ENCODE measurements at regions of chr5 and their contacts with region 1.

Region 1: GRCh38 chr5:54310433-54311175 is at the start of gene ARL15:
- DNase-seq: peak; percentile 98
- H3K4me3 Mint-ChIP-seq: peak within 1 kb of the TSS; percentile 89
- H3K27ac Mint-ChIP-seq: peak within 1 kb of the TSS; percentile 84
- H3K4me1 Mint-ChIP-seq: peaks cover 24% of the 10 kb centered on the region
- H3K27me3 Mint-ChIP-seq: no peaks in the 10 kb centered on the region
- total RNA-seq, gene ARL15: 6.7 to 7.0 TPM

Region 2: DNA sequence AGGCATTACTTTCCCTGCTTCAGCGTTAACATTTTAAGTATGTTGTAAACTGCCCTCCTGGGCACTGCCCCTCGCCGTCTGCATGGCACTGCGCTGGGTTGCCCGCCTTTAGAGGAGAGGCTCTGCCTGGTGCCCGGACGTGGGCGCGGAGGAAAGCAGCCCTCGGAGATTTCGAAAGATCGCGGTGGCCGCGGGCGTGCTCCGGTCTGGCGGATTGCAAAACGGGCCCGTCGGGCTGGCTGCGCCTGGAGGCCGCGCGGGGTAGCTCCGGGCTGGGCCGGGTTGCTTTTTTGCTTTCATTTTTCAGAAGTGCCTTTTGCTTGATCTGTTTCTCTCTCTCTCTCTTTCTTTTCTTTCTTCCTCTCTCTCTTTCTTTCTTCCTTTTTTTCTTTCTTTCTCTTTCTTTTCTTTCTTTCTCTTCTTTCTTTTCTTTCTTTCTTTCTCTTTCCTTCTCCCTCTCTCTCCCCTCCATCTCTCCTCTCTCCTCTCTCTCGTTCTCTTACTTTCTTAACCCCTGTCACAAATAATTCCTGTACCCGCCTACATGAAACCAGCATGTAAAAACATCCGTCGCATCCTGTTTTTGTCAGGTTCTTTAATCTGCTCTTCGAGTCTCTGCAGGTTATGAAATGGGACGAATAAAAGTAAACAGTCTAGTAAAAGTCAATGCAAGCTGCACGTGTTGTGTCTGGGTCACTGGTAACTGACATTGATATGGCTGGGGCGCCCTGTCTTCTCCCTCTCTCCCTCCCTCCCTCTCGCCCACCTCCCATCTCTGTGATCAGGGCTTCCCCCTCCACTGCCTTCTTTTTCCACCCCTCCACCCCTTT is 828.5 kb before region 1 on chr5:
- CTCF ChIA-PET with region 1: no interaction called
- intact Hi-C with region 1: loop called (anchors 2 kb)
- DNase-seq: peak; percentile 71
- H3K4me3 Mint-ChIP-seq: peak overlapping the region; percentile 76
- H3K27ac Mint-ChIP-seq: no peak overlapping the region
- H3K4me1 Mint-ChIP-seq: peaks cover 15% of the 10 kb centered on the region
- H3K27me3 Mint-ChIP-seq: peaks cover 38% of the 10 kb centered on the region

Region 3: GRCh38 chr5:54243473-54244080 is 67.0 kb before region 1 on chr5:
- CTCF ChIA-PET with region 1: interaction called, 5 read pairs
- intact Hi-C with region 1: loop called (anchors 1 kb)
- DNase-seq: peak; percentile 52
- H3K4me3 Mint-ChIP-seq: no peak overlapping the region
- H3K27ac Mint-ChIP-seq: no peak overlapping the region
- H3K4me1 Mint-ChIP-seq: peaks cover 12% of the 10 kb centered on the region
- H3K27me3 Mint-ChIP-seq: no peaks in the 10 kb centered on the region

Region 4: DNA sequence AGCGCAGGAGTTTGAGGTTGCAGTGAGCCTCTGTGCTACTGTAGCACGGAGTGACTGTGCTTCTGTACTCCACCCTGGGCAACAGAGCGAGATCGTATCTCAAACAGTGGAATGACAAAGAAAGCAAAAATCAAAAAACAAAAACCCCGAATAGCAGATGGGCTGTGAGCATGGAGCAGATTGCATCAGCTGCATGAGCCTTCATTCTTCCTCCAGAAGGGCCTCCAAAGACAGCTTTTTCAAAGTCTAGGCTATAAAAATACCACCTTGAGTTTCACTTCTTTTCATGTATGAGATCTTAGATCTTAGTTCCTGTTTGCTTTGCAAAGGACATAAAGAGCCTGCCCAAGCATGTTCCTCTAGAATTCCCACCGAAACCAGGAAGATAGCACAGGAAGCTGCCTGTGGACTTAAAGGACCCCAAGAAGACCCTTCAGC is 129.9 kb after region 1 on chr5:
- CTCF ChIA-PET with region 1: interaction called, 3 read pairs
- intact Hi-C with region 1: loop called (anchors 1 kb)
- DNase-seq: peak; percentile 48
- H3K4me3 Mint-ChIP-seq: peak overlapping the region; percentile 62
- H3K27ac Mint-ChIP-seq: peak overlapping the region; percentile 78
- H3K4me1 Mint-ChIP-seq: peaks cover 35% of the 10 kb centered on the region
- H3K27me3 Mint-ChIP-seq: no peaks in the 10 kb centered on the region

Region 5: DNA sequence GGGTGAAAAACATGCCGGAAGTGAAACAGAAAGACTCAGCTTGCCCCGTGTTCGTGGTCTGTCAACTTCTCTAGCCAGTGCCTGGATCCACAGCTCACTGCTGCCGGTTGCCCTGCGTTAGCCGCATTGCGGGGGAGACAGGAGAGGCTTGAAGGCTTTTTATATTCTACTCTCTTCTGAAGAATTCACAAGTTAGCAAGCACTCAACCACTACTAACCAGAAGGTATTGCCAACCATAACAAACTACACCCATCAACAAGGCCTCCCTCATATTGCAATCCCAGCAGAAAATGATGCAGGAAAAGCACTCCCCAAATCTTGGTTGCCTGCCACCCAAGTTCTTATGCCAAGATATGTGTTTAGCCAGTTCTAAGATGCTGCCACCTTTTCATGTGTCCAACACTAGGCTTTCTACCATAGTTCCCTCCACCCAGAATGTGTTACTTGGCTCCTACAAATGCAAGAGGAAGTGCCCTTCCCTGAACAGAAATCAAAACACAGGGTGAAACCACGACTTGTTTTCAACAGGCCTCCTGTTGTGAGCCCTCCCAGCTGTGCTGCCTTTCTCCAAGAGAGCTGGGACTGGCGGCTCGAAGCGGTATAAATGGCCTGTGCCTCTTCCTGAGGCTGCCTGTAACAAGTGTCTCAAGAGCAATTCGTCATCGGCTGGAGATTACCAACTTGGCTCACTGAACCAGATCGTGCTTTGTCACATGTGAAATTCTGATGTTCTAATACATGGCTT is 335.9 kb after region 1 on chr5:
- CTCF ChIA-PET with region 1: no interaction called
- intact Hi-C with region 1: loop called (anchors 5 kb)
- DNase-seq: peak; percentile 70
- H3K4me3 Mint-ChIP-seq: peak overlapping the region; percentile 53
- H3K27ac Mint-ChIP-seq: peak overlapping the region; percentile 71
- H3K4me1 Mint-ChIP-seq: peaks cover 51% of the 10 kb centered on the region
- H3K27me3 Mint-ChIP-seq: no peaks in the 10 kb centered on the region

Region 6: GRCh38 chr5:55307383-55308253 is 997.0 kb after region 1 on chr5 and contains the starts of genes DHX29 and MTREX:
- CTCF ChIA-PET with region 1: no interaction called
- intact Hi-C with region 1: loop called (anchors 10 kb)
- DNase-seq: peak; percentile 94
- H3K4me3 Mint-ChIP-seq: no peak within 1 kb of the TSS
- H3K27ac Mint-ChIP-seq: no peak within 1 kb of the TSS
- H3K4me1 Mint-ChIP-seq: peaks cover 33% of the 10 kb centered on the region
- H3K27me3 Mint-ChIP-seq: no peaks in the 10 kb centered on the region
- total RNA-seq, gene DHX29: 11.0 to 11.1 TPM
- total RNA-seq, gene MTREX: 76.1 to 79.7 TPM

Measured in activated naive CD4-positive, alpha-beta T cell treated with anti-CD3 and anti-CD28 coated beads for 36 hours (primary cell).